ENCODE measurements at regions of chr1 and their contacts with region 1.

Region 1: DNA sequence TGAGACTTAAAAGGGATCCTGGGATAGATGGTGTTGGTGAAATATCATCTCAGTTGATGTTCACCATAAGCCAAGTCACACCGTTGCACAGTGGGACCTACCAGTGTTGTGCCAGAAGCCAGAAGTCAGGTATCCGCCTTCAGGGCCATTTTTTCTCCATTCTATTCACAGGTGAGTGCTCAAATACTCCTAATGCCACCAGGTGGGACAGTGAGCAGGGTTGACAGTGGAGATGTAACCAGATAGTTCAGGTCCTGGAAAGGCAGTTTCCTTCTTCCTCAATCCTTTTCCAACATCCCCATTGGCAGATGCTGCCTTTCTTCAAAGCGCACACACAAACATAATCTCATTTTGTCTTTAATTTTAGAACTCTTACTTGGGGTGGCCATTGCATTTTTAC is 11.6 kb downstream of the CD160 start:
- DNase-seq: no peak
- H3K4me3 ChIP-seq: no peak overlapping the region
- H3K27ac ChIP-seq: no peak overlapping the region
- H3K4me1 ChIP-seq: no peaks in the 10 kb centered on the region
- CTCF ChIP-seq: no peak

Region 2: DNA sequence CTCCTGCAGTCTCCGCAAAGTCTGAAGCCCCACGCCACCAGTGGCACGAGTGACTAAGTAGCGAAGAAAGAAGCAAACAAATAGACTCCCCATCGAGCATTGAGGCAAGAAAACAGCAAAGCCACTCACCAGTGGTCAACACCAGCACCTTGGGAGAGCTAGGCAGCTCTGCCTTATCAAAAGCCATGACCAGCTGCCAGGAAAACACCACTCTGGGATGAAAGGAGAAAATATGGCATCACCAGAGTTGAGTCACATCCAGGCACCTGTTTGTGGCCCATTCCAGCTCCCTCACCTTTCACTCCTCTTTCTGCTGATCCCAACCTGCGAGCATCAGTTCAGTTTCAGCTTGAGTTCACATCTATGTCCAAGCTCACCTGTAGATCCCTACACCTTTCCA is 41.0 kb before region 1 on chr1:
- CTCF ChIA-PET with region 1: no interaction called
- POLR2A ChIA-PET with region 1: no interaction called
- intact Hi-C with region 1: loop called (anchors 10 kb)
- DNase-seq: no peak
- H3K4me3 ChIP-seq: no peak overlapping the region
- H3K27ac ChIP-seq: no peak overlapping the region
- H3K4me1 ChIP-seq: no peaks in the 10 kb centered on the region
- CTCF ChIP-seq: no peak

Region 3: GRCh38 chr1:145996433-145997015 is 265.6 kb after region 1 on chr1 and contains the start of gene TXNIP:
- CTCF ChIA-PET with region 1: no interaction called
- POLR2A ChIA-PET with region 1: no interaction called
- intact Hi-C with region 1: no loop called
- DNase-seq: peak; percentile 95
- H3K4me3 ChIP-seq: peak within 1 kb of the TSS; percentile 81
- H3K27ac ChIP-seq: peak within 1 kb of the TSS; percentile 81
- H3K4me1 ChIP-seq: peaks cover 50% of the 10 kb centered on the region
- CTCF ChIP-seq: no peak
- total RNA-seq, gene TXNIP: 99.9 and 144 TPM in 2 replicates

Measured in OCI-LY7 (cell line).